Right lobe of liver (tissue), 6 donors: ENCODE measurements at regions of chr5 and their contacts with region 1.

Region 1: GRCh38 chr5:35229076-35230037 is 930 bp downstream of the PRLR start:
- DNase-seq: peak; percentile 77 to 78 (median 78)
- ATAC-seq: peak; percentile 90 to 96 (median 92)
- H3K4me3 ChIP-seq: peak overlapping the region; percentile 56 to 64 (median 58)
- H3K27ac ChIP-seq: peak overlapping the region; percentile 70 to 82 (median 79)
- H3K4me1 ChIP-seq: no peaks in the 10 kb centered on the region
- H3K27me3 ChIP-seq: no peaks in the 10 kb centered on the region
- CTCF ChIP-seq: peak; percentile 40 to 63 (median 52)
- POLR2A ChIP-seq: no peak

Region 2: GRCh38 chr5:34487159-34487879 is 742.0 kb before region 1 on chr5:
- intact Hi-C with region 1: no loop called
- DNase-seq: peak in 2 of 3 donors; percentile 38 to 81
- ATAC-seq: peak; percentile 72 to 88 (median 82)
- H3K4me3 ChIP-seq: no peak overlapping the region
- H3K27ac ChIP-seq: peak overlapping the region; percentile 66 to 79 (median 71)
- H3K4me1 ChIP-seq: peaks cover 0 to 46% (median 14%) of the 10 kb centered on the region in 4 donors
- H3K27me3 ChIP-seq: no peaks in the 10 kb centered on the region
- CTCF ChIP-seq: no peak
- POLR2A ChIP-seq: peak; percentile 27

Region 3: DNA sequence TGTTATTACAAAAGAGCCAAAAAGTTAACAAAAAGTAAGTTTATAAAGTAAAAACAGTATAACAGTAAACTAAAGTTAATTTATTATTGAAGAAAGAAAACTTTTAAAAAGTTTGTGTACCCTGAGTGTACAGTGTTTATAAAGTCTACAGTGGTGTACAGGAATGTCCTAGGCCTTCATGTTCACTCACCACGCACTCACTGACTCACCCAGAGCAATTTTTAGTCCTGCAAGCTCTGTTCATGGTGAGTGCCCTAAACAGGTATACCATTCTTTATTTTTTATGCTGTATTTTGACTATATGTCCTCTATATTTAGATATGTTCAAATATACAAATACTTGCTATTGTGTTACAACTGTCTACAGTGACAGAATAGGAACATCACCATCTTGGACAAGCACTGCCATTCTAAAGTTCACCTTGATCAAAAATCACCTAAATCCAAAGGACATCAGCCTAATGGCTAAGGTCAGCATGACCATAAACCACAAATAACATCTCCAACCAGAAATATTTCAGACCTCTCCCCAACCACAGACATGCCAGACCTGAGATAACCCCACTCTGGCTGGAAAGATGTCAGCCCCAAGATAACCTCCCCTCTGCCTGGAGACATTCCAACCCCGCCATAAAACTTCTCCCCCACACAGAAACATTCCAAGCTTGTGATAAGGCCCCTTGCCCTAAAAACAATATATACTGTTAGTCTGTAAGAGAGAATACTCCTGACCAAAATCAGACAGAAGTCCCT is 237.7 kb before region 1 on chr5:
- intact Hi-C with region 1: no loop called
- DNase-seq: no peak
- ATAC-seq: no peak
- H3K4me3 ChIP-seq: no peak overlapping the region
- H3K27ac ChIP-seq: no peak overlapping the region
- H3K4me1 ChIP-seq: peaks cover 0 to 6% (median 0%) of the 10 kb centered on the region in 4 donors
- H3K27me3 ChIP-seq: no peaks in the 10 kb centered on the region
- CTCF ChIP-seq: no peak
- POLR2A ChIP-seq: no peak

Region 4: GRCh38 chr5:35016174-35017051 is 212.9 kb before region 1 on chr5:
- intact Hi-C with region 1: no loop called
- DNase-seq: no peak
- ATAC-seq: no peak
- H3K4me3 ChIP-seq: no peak overlapping the region
- H3K27ac ChIP-seq: no peak overlapping the region
- H3K4me1 ChIP-seq: peaks cover 0 to 9% (median 0%) of the 10 kb centered on the region in 4 donors
- H3K27me3 ChIP-seq: no peaks in the 10 kb centered on the region
- CTCF ChIP-seq: no peak
- POLR2A ChIP-seq: no peak

Region 5: GRCh38 chr5:35281613-35282012 is 52.3 kb after region 1 on chr5:
- intact Hi-C with region 1: no loop called
- DNase-seq: no peak
- ATAC-seq: no peak
- H3K4me3 ChIP-seq: no peak overlapping the region
- H3K27ac ChIP-seq: no peak overlapping the region
- H3K4me1 ChIP-seq: no peaks in the 10 kb centered on the region
- H3K27me3 ChIP-seq: no peaks in the 10 kb centered on the region
- CTCF ChIP-seq: no peak
- POLR2A ChIP-seq: no peak

Region 6: DNA sequence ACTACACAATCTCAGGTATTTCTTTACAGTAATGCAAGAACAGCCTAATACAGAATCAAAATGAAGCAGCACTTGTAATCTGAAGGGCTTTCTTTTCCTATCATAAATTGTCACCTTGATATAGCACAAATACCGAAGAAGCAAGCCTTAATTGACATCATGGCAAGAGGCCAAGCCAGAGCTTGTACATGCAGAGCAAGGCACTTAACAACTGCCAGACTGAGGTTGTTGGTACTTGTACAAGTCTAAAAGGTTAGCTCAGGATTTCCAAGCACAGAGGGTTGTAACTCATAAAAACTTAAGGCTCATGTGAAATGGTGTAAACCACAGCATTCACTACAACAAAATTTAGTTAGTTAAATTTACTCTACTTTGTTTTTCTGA is 229.5 kb after region 1 on chr5:
- intact Hi-C with region 1: loop called in 1 of 2 experiments (anchors 10 kb)
- DNase-seq: peak in 1 of 3 donors; percentile 68
- ATAC-seq: peak; percentile 73 to 84 (median 75)
- H3K4me3 ChIP-seq: no peak overlapping the region
- H3K27ac ChIP-seq: peak overlapping the region in 2 of 3 donors; percentile 24 to 81
- H3K4me1 ChIP-seq: peaks cover 0 to 19% (median 5%) of the 10 kb centered on the region in 4 donors
- H3K27me3 ChIP-seq: no peaks in the 10 kb centered on the region
- CTCF ChIP-seq: no peak
- POLR2A ChIP-seq: no peak